ENCODE measurements at regions of chr2 and their contacts with region 1.

Region 1: GRCh38 chr2:182949572-182950189 is 83.2 kb upstream of the FRZB start:
- DNase-seq: peak; percentile 60 to 83
- ATAC-seq: peak; percentile 82 to 89
- H3K4me3 ChIP-seq: no peak overlapping the region
- H3K27ac ChIP-seq: peak overlapping the region; percentile 68 to 85 (median 77)
- H3K4me1 ChIP-seq: peaks cover 6 to 20% of the 10 kb centered on the region in 2 donors
- H3K27me3 ChIP-seq: no peaks in the 10 kb centered on the region
- CTCF ChIP-seq: no peak
- POLR2A ChIP-seq: no peak

Region 2: DNA sequence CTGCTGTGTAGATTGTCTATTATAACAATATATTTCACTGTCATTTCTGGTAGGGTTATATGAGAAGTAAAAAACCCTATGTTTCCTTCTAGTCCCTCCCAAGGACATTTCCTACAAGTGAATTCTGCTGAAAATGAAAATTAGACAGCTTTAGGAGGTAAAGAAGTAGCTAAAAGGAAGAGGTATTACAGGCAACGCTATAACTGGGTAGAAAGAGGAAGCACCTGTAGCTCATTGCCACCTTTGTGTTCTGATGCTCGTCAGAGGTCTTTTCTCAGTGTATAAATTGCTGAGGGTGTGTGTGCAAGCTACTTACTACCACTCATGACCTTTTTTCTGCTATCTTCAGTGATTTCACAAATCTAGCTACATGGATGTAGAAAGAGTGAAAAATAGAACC is 232.3 kb before region 1 on chr2:
- in situ Hi-C with region 1: no loop called
- intact Hi-C with region 1: no loop called
- DNase-seq: no peak
- ATAC-seq: no peak
- H3K4me3 ChIP-seq: peak overlapping the region in 3 of 4 donors; percentile 87 to 97 (median 93)
- H3K27ac ChIP-seq: peak overlapping the region in 2 of 4 donors; percentile 12 to 84
- H3K4me1 ChIP-seq: peaks cover 12 to 13% of the 10 kb centered on the region in 2 donors
- H3K27me3 ChIP-seq: no peaks in the 10 kb centered on the region
- CTCF ChIP-seq: no peak
- POLR2A ChIP-seq: no peak

Region 3: GRCh38 chr2:182914847-182915246 is 34.8 kb before region 1 on chr2:
- in situ Hi-C with region 1: no loop called
- intact Hi-C with region 1: loop called (anchors 5 kb)
- DNase-seq: no peak
- ATAC-seq: no peak
- H3K4me3 ChIP-seq: no peak overlapping the region
- H3K27ac ChIP-seq: peak overlapping the region; percentile 88 to 93 (median 88)
- H3K4me1 ChIP-seq: peaks cover 35 to 52% of the 10 kb centered on the region in 2 donors
- H3K27me3 ChIP-seq: no peaks in the 10 kb centered on the region
- CTCF ChIP-seq: no peak
- POLR2A ChIP-seq: no peak